Mammary epithelial cell (primary cell): ENCODE measurements at regions of chr13 and their contacts with region 1.

Region 1: DNA sequence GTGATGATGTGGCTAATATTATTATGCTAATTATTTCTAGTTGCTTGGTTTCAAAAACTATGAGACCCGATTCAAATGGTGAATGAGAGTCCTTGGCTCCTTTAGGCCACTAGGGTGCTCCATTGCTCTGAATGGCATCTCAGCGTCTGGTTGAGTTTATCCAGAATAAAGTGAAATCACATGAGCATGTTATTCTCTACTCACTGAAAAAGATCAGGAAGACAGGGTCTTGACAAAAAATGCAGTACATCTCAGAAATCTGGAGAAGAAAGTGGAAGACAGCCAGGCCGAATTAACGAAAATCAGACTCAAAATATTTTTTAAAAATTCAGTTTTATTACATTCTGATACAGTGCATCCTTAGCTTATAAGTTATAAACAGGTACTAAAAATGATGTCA is 516.2 kb downstream of the MYO16 start:
- DNase-seq: peak; percentile 72
- H3K4me3 ChIP-seq: no peak overlapping the region
- H3K27ac ChIP-seq: peak overlapping the region; percentile 99
- H3K4me1 ChIP-seq: peaks cover 38% of the 10 kb centered on the region
- H3K27me3 ChIP-seq: no peaks in the 10 kb centered on the region
- CTCF ChIP-seq: peak; percentile 93 to 98

Region 2: DNA sequence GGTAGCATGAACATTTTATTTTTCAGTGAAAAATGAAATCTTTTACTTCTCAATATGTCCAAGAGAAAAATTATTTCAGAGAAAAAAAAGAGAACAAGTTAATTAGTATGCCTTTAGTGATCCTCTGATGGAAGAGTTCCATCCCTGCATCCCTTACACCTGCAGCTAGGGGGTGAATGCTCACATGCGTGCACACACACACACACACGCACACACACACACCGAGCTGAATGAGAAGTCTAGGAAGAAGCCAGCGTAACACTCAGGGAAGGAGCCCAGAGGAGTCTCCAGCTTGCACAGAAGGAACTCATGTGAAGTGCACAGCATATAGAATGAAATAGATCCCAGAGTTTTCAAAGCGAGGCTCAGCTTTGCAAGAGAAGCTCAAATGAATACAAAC is 130.2 kb after region 1 on chr13:
- CTCF ChIA-PET with region 1: interaction called, 6 read pairs
- dilution Hi-C with region 1: no loop called
- in situ Hi-C with region 1: no loop called
- intact Hi-C with region 1: loop called (anchors 1 kb)
- DNase-seq: peak; percentile 40
- H3K4me3 ChIP-seq: no peak overlapping the region
- H3K27ac ChIP-seq: no peak overlapping the region
- H3K4me1 ChIP-seq: peaks cover 26% of the 10 kb centered on the region
- H3K27me3 ChIP-seq: no peaks in the 10 kb centered on the region
- CTCF ChIP-seq: peak; percentile 39 to 52

Region 3: DNA sequence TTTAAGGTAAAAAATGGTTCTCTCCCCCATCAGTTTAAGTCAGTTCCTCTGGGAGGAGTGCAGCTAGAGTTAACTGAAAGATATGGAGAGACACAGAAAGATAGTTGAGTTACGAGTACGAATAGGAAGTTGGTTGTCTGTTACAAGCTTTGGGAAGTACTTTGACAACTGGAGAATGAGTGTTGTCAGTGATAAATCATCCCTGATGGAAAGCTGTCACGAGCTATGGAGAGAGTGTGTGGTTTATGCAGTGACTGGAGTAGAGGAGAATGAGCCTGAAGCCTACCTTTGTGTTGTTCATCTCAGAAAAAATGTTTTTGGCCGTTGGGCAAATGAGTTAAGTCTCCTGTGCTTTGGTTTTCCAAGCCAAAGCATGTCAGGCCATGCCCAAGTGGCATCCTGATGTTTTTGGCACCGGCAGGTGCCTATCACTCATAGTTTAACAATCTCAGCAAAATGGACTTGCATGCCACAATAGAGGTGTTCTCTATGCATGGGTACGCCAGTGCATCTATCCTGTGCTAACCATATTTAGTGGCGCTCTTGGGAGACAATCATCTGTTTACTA is 290.5 kb after region 1 on chr13:
- CTCF ChIA-PET with region 1: interaction called, 3 read pairs
- dilution Hi-C with region 1: no loop called
- in situ Hi-C with region 1: no loop called
- intact Hi-C with region 1: loop called (anchors 1 kb)
- DNase-seq: peak; percentile 98
- H3K4me3 ChIP-seq: peak overlapping the region in 1 of 3 experiments; percentile 7
- H3K27ac ChIP-seq: peak overlapping the region; percentile 65
- H3K4me1 ChIP-seq: peaks cover 26% of the 10 kb centered on the region
- H3K27me3 ChIP-seq: no peaks in the 10 kb centered on the region
- CTCF ChIP-seq: no peak

Region 4: GRCh38 chr13:109454167-109454917 is 308.7 kb after region 1 on chr13:
- CTCF ChIA-PET with region 1: no interaction called
- dilution Hi-C with region 1: no loop called
- in situ Hi-C with region 1: no loop called
- intact Hi-C with region 1: no loop called
- DNase-seq: no peak
- H3K4me3 ChIP-seq: no peak overlapping the region
- H3K27ac ChIP-seq: no peak overlapping the region
- H3K4me1 ChIP-seq: no peaks in the 10 kb centered on the region
- H3K27me3 ChIP-seq: no peaks in the 10 kb centered on the region
- CTCF ChIP-seq: no peak

Region 5: DNA sequence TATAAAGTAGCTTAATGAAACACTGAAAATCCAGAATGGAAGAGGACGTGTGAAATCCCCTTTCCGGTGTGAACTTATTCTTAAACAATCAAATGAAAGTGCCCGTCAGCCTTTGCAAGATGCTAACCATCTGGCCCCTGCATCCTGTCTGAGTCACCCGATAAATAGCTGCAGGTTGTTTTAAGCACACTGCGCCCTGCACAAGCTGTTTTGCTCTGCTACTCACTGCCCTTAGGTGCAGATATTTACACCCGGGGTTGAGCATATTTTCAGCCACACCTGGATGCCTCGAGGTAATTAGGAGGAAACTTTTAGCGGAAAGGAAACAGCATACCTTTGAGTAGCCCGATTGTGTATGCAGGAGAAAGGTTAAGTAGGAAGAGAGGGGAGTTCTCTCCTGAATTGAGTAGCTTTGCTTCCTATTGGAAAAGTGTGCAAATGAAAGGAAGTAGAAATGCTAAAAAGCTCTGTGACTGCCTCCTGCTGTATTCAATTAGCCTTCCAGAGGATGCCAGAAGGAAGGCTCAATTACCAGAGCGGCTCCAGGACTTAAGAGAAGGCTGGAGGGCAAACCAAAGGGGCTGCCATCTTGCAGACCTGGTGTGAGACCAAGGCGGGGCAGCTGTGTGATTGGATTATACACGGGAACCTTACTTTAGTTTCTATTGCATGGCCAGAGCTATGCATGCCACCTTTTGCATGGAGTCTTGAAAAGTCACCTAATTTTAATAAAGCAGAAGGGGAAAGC is 598.2 kb after region 1 on chr13:
- CTCF ChIA-PET with region 1: interaction called, 3 read pairs
- dilution Hi-C with region 1: no loop called
- in situ Hi-C with region 1: no loop called
- intact Hi-C with region 1: loop called (anchors 5 kb)
- DNase-seq: peak; percentile 91
- H3K4me3 ChIP-seq: no peak overlapping the region
- H3K27ac ChIP-seq: peak overlapping the region; percentile 59
- H3K4me1 ChIP-seq: peaks cover 22% of the 10 kb centered on the region
- H3K27me3 ChIP-seq: no peaks in the 10 kb centered on the region
- CTCF ChIP-seq: peak; percentile 4 to 12

Region 6: GRCh38 chr13:109998726-109999533 is 853.3 kb after region 1 on chr13:
- CTCF ChIA-PET with region 1: no interaction called
- dilution Hi-C with region 1: no loop called
- in situ Hi-C with region 1: no loop called
- intact Hi-C with region 1: loop called (anchors 2 kb)
- DNase-seq: peak; percentile 97
- H3K4me3 ChIP-seq: no peak overlapping the region
- H3K27ac ChIP-seq: peak overlapping the region; percentile 59
- H3K4me1 ChIP-seq: peaks cover 42% of the 10 kb centered on the region
- H3K27me3 ChIP-seq: no peaks in the 10 kb centered on the region
- CTCF ChIP-seq: peak; percentile 8 to 35